B cell (primary cell): ENCODE measurements at regions of chr9 and their contacts with region 1.

Region 1: DNA sequence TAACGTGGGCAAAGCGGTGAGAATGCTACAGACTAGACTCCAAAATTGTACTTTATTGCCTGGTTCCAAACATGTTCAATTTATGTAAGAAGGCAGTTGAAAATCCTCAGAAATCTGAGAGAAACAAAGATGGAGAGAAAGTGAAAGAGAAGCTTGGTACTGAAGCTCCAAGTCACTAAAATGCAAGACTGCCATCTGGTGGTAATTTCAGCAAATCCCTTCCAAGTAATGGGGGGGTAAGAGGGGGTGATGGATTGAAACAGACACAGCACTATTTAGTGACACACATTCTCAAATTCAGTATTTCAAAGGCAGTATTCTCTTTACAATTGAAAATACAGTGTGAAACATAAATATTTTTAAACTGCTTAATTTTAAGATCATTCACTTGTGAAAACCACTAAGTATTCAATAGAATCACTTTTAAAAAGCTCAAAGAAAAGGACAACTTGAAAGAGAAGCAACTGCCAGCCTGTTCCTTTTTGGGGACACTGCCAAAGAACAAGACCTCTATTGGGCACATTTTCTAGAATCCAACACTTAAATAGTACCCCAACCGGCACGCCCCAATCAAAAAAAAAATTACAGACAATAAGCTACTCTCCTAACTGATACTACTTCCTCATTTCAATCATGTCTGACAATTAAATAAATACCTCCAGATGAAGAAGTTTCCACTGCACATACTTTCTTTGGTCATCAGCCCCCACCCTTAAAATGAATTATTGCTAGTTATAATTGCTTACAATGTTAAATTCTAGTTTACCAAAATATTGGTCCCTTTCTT is 131.5 kb downstream of the AGTPBP1 start:
- DNase-seq: peak; percentile 82
- ATAC-seq: peak; percentile 91
- H3K4me3 ChIP-seq: peak overlapping the region; percentile 2 to 34 (median 27)
- H3K4me3 Mint-ChIP-seq: peak overlapping the region; percentile 65
- H3K27ac ChIP-seq: peak overlapping the region in 1 of 2 donors; percentile 51
- H3K27ac Mint-ChIP-seq: peak overlapping the region; percentile 71
- H3K4me1 ChIP-seq: peaks cover 11% of the 10 kb centered on the region in 2 donors
- H3K4me1 Mint-ChIP-seq: peaks cover 13% of the 10 kb centered on the region
- H3K27me3 ChIP-seq: no peaks in the 10 kb centered on the region
- H3K27me3 Mint-ChIP-seq: no peaks in the 10 kb centered on the region
- CTCF ChIP-seq: peak; percentile 88

Region 2: GRCh38 chr9:84397151-84397728 is 1213.0 kb before region 1 on chr9:
- CTCF ChIA-PET with region 1: interaction called, 135 read pairs
- POLR2A ChIA-PET with region 1: no interaction called
- intact Hi-C with region 1: loop called (anchors 1 kb)
- DNase-seq: peak; percentile 71
- ATAC-seq: peak; percentile 64
- H3K4me3 ChIP-seq: no peak overlapping the region
- H3K4me3 Mint-ChIP-seq: no peak overlapping the region
- H3K27ac ChIP-seq: no peak overlapping the region
- H3K27ac Mint-ChIP-seq: no peak overlapping the region
- H3K4me1 ChIP-seq: peaks cover 0 to 2% of the 10 kb centered on the region in 2 donors
- H3K4me1 Mint-ChIP-seq: no peaks in the 10 kb centered on the region
- H3K27me3 ChIP-seq: peaks cover 0 to 3% (median 0%) of the 10 kb centered on the region in 4 experiments
- H3K27me3 Mint-ChIP-seq: peaks cover 3% of the 10 kb centered on the region
- CTCF ChIP-seq: peak; percentile 97

Region 3: GRCh38 chr9:85647571-85647970 is 37.3 kb after region 1 on chr9:
- CTCF ChIA-PET with region 1: interaction called, 13 read pairs
- POLR2A ChIA-PET with region 1: no interaction called
- intact Hi-C with region 1: no loop called
- DNase-seq: peak; percentile 52
- ATAC-seq: peak; percentile 85
- H3K4me3 ChIP-seq: peak overlapping the region in 1 of 5 experiments; percentile 26
- H3K4me3 Mint-ChIP-seq: peak overlapping the region; percentile 48
- H3K27ac ChIP-seq: peak overlapping the region in 1 of 2 donors; percentile 25
- H3K27ac Mint-ChIP-seq: peak overlapping the region; percentile 62
- H3K4me1 ChIP-seq: peaks cover 14 to 16% of the 10 kb centered on the region in 2 donors
- H3K4me1 Mint-ChIP-seq: peaks cover 23% of the 10 kb centered on the region
- H3K27me3 ChIP-seq: no peaks in the 10 kb centered on the region
- H3K27me3 Mint-ChIP-seq: no peaks in the 10 kb centered on the region
- CTCF ChIP-seq: no peak

Region 4: GRCh38 chr9:85702726-85703289 is 92.5 kb after region 1 on chr9:
- CTCF ChIA-PET with region 1: interaction called, 10 read pairs
- POLR2A ChIA-PET with region 1: no interaction called
- intact Hi-C with region 1: no loop called
- DNase-seq: no peak
- ATAC-seq: no peak
- H3K4me3 ChIP-seq: no peak overlapping the region
- H3K4me3 Mint-ChIP-seq: no peak overlapping the region
- H3K27ac ChIP-seq: no peak overlapping the region
- H3K27ac Mint-ChIP-seq: no peak overlapping the region
- H3K4me1 ChIP-seq: peaks cover 6 to 7% of the 10 kb centered on the region in 2 donors
- H3K4me1 Mint-ChIP-seq: peaks cover 29% of the 10 kb centered on the region
- H3K27me3 ChIP-seq: no peaks in the 10 kb centered on the region
- H3K27me3 Mint-ChIP-seq: no peaks in the 10 kb centered on the region
- CTCF ChIP-seq: no peak

Region 5: DNA sequence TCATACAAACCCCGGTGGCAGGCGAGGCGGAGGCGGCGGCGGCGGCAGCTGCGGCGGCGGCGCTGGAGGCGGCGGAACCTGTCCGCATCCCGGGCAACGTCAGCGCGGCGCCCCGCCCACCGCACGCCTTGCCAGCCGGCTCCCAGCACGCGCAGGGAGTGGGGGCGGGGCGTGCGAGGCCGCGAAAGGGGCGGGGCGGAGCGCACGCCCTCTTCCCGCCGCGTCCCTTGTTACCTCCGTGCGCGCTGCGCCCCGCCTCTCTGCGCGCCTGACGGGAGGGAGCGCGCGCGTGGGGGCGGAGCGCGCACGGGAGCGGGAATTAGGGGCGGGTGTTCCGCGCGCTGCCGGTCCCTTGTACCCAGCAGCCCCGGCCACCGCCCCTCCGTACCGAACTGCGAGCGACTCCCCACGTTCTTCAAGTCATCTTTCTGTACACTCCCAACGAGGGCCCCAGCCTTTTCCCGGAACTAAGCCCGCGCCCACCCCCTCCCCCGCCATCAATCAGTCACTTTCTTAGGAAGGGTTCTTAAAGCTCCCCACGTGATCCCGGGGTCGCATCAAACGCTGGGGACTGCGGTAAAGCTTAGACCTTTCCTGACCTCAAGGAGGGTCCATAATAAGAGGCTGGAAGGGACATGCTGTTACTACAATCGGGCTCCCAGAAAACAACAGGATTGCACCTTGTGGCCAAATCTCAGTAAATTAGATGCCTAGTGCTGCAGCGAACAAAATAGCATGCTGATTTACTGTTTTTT is 131.8 kb after region 1 on chr9 and contains the start of gene AGTPBP1:
- CTCF ChIA-PET with region 1: no interaction called
- POLR2A ChIA-PET with region 1: interaction called, 3 read pairs
- intact Hi-C with region 1: loop called (anchors 2 kb)
- DNase-seq: peak; percentile 97
- ATAC-seq: peak; percentile 92
- H3K4me3 ChIP-seq: peak within 1 kb of the TSS; percentile 80 to 91 (median 82)
- H3K4me3 Mint-ChIP-seq: peak within 1 kb of the TSS; percentile 99
- H3K27ac ChIP-seq: peak within 1 kb of the TSS; percentile 76 to 96
- H3K27ac Mint-ChIP-seq: peak within 1 kb of the TSS; percentile 96
- H3K4me1 ChIP-seq: peaks cover 9 to 11% of the 10 kb centered on the region in 2 donors
- H3K4me1 Mint-ChIP-seq: peaks cover 21% of the 10 kb centered on the region
- H3K27me3 ChIP-seq: peaks cover 0 to 3% (median 0%) of the 10 kb centered on the region in 4 experiments
- H3K27me3 Mint-ChIP-seq: peaks cover 7% of the 10 kb centered on the region
- CTCF ChIP-seq: no peak
- total RNA-seq, gene AGTPBP1: 33.1 and 35.4 TPM in 2 replicates

Region 6: GRCh38 chr9:85940832-85941621 is 330.8 kb after region 1 on chr9 and contains the start of gene NAA35:
- CTCF ChIA-PET with region 1: no interaction called
- POLR2A ChIA-PET with region 1: no interaction called
- intact Hi-C with region 1: loop called (anchors 5 kb)
- DNase-seq: peak; percentile 100
- ATAC-seq: peak; percentile 85
- H3K4me3 ChIP-seq: peak within 1 kb of the TSS; percentile 59 to 94 (median 85)
- H3K4me3 Mint-ChIP-seq: peak within 1 kb of the TSS; percentile 92
- H3K27ac ChIP-seq: peak within 1 kb of the TSS; percentile 79 to 90
- H3K27ac Mint-ChIP-seq: peak within 1 kb of the TSS; percentile 93
- H3K4me1 ChIP-seq: peaks cover 22 to 26% of the 10 kb centered on the region in 2 donors
- H3K4me1 Mint-ChIP-seq: peaks cover 27% of the 10 kb centered on the region
- H3K27me3 ChIP-seq: peaks cover 0 to 7% (median 0%) of the 10 kb centered on the region in 4 experiments
- H3K27me3 Mint-ChIP-seq: peaks cover 10% of the 10 kb centered on the region
- CTCF ChIP-seq: no peak
- total RNA-seq, gene NAA35: 26.1 and 26.2 TPM in 2 replicates

Region 7: DNA sequence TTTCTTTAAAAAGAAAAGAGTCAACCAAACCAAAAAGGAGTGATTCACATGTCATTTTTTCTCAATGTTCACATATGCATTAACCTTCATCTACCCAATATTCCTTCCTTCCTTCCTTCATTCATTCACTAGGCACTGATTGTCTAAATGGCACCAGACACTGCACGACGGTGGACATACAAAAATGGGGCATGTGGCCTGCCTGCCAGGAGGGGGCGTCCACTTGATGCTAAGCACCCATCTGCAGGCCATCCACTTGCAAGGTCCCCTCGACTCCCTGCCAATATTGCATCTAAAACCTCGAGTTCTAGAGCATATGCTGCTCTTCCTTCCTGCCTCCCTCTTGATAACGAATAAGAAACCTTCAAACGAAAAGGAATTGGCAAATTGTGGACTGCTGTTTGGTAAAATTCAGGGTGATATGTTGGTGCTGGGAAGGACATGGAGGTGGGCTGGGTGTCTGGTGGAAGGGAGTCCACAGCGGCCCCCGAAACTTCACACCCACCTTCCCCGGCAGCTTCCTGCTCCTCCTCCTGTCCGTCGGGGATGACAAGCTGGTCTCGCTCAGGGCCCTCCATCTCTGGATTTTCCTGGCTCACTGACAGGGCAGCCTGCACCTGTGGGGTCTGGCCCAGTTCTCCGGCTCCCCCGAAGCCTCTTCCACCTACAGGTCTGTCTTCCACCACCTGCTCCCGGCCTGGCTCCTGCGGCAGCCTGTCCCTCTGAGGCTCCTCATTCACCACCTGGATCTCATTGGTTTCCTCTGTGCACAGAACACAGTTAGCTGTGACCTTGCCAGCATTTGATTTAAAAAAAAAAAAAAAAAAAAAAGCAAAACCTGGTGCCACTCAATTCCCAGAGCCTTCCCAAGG is 424.8 kb after region 1 on chr9:
- CTCF ChIA-PET with region 1: no interaction called
- POLR2A ChIA-PET with region 1: no interaction called
- intact Hi-C with region 1: no loop called
- DNase-seq: no peak
- ATAC-seq: no peak
- H3K4me3 ChIP-seq: no peak overlapping the region
- H3K4me3 Mint-ChIP-seq: no peak overlapping the region
- H3K27ac ChIP-seq: no peak overlapping the region
- H3K27ac Mint-ChIP-seq: no peak overlapping the region
- H3K4me1 ChIP-seq: no peaks in the 10 kb centered on the region
- H3K4me1 Mint-ChIP-seq: no peaks in the 10 kb centered on the region
- H3K27me3 ChIP-seq: no peaks in the 10 kb centered on the region
- H3K27me3 Mint-ChIP-seq: no peaks in the 10 kb centered on the region
- CTCF ChIP-seq: no peak